IMR-90 (cell line): ENCODE measurements at regions of chr3 and their contacts with region 1.

Region 1: GRCh38 chr3:124363476-124363875 is 366.8 kb upstream of the UMPS start:
- DNase-seq: peak; percentile 91
- ATAC-seq: peak; percentile 71
- H3K4me3 ChIP-seq: no peak overlapping the region
- H3K27ac ChIP-seq: no peak overlapping the region
- H3K4me1 ChIP-seq: peaks cover 8% of the 10 kb centered on the region
- H3K27me3 ChIP-seq: no peaks in the 10 kb centered on the region
- CTCF ChIP-seq: no peak
- POLR2A ChIP-seq: no peak
- RAD21 ChIP-seq: no peak

Region 2: GRCh38 chr3:123884203-123884831 is 479.2 kb before region 1 on chr3 and contains the start of gene MYLK:
- CTCF ChIA-PET with region 1: no interaction called
- POLR2A ChIA-PET with region 1: no interaction called
- dilution Hi-C with region 1: no loop called
- in situ Hi-C with region 1: no loop called
- intact Hi-C with region 1: no loop called
- DNase-seq: peak; percentile 95
- ATAC-seq: peak; percentile 94
- H3K4me3 ChIP-seq: peak within 1 kb of the TSS; percentile 63
- H3K27ac ChIP-seq: peak within 1 kb of the TSS; percentile 50
- H3K4me1 ChIP-seq: peaks cover 15% of the 10 kb centered on the region
- H3K27me3 ChIP-seq: no peaks in the 10 kb centered on the region
- CTCF ChIP-seq: no peak
- POLR2A ChIP-seq: no peak
- RAD21 ChIP-seq: no peak
- total RNA-seq, gene MYLK: 484 and 521 TPM in 2 replicates

Region 3: GRCh38 chr3:124117486-124117885 is 246.0 kb before region 1 on chr3:
- CTCF ChIA-PET with region 1: no interaction called
- POLR2A ChIA-PET with region 1: no interaction called
- dilution Hi-C with region 1: no loop called
- in situ Hi-C with region 1: no loop called
- intact Hi-C with region 1: no loop called
- DNase-seq: peak; percentile 82
- ATAC-seq: peak; percentile 53
- H3K4me3 ChIP-seq: no peak overlapping the region
- H3K27ac ChIP-seq: no peak overlapping the region
- H3K4me1 ChIP-seq: peaks cover 21% of the 10 kb centered on the region
- H3K27me3 ChIP-seq: no peaks in the 10 kb centered on the region
- CTCF ChIP-seq: no peak
- POLR2A ChIP-seq: no peak
- RAD21 ChIP-seq: no peak

Region 4: DNA sequence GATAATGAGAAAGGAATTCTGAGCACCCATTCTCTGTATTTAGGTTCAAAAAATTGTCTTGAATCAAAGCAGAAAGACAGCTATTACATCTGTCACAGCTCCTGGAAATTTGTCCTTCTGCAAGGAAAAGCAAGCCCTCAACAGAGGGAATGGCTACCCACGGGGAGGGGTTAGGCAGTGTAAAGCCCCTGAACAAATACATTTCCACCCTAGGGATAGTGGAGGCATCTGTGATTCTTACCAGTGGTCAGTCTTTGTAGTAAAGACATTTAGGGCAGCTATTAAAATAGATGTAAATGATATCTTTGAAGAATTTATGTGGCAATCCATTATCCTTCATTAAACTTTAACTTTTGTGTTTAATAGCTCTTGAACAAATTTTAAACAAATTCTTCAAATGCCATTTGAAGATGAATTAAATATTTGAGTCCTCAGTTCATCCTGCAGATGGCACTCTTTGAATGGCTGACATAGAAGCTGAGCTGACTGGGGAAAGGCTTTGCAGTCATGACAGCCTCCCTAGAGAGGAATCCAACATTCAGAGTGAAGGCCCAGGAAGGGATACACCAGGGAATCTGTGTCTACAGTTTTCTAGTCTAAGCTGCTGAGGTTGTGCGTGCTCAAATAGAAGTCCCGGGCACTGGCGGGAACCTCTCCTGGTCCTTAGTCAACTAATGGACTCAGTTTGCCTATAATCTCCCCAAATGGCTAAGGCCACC is 11.9 kb before region 1 on chr3:
- CTCF ChIA-PET with region 1: interaction called, 12 read pairs
- POLR2A ChIA-PET with region 1: no interaction called
- dilution Hi-C with region 1: no loop called
- in situ Hi-C with region 1: no loop called
- intact Hi-C with region 1: no loop called
- DNase-seq: peak; percentile 78
- ATAC-seq: peak; percentile 96
- H3K4me3 ChIP-seq: no peak overlapping the region
- H3K27ac ChIP-seq: no peak overlapping the region
- H3K4me1 ChIP-seq: no peaks in the 10 kb centered on the region
- H3K27me3 ChIP-seq: peaks cover 7% of the 10 kb centered on the region; the same call in 1 of the 2 replicates
- CTCF ChIP-seq: peak; percentile 75
- POLR2A ChIP-seq: no peak
- RAD21 ChIP-seq: peak; percentile 90